Sigmoid colon (tissue), 7 donors: ENCODE measurements at regions of chr11 and their contacts with region 1.

Region 1: GRCh38 chr11:122853971-122854446 is 15.7 kb downstream of the CRTAM start:
- DNase-seq: no peak
- H3K4me3 ChIP-seq: no peak overlapping the region
- H3K27ac ChIP-seq: no peak overlapping the region
- H3K4me1 ChIP-seq: no peaks in the 10 kb centered on the region
- H3K27me3 ChIP-seq: peaks cover 0 to 9% (median 0%) of the 10 kb centered on the region in 3 donors
- CTCF ChIP-seq: peak; percentile 3 to 59 (median 45)
- EP300 ChIP-seq: no peak
- POLR2A ChIP-seq: no peak

Region 2: DNA sequence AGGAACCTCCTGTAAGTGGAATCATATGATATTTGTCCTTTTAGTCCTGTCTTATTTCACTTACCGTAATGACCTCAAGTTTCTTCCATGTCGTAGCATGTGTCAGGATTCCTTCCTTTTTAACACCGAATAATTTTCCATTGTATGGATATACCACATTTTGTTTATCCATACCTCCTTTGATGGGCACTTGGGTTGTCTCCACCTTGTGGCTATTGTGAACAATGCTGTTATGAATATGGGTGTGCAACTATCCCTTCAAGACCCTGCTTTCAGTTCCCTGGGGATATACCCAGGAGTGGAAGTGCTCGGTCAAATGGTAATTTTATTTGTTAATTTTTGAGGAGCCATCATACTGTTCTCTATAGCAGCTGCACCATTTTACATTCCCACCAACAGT is 493.1 kb before region 1 on chr11:
- intact Hi-C with region 1: no loop called
- DNase-seq: no peak
- H3K4me3 ChIP-seq: no peak overlapping the region
- H3K27ac ChIP-seq: no peak overlapping the region
- H3K4me1 ChIP-seq: no peaks in the 10 kb centered on the region
- H3K27me3 ChIP-seq: no peaks in the 10 kb centered on the region
- CTCF ChIP-seq: no peak
- EP300 ChIP-seq: no peak
- POLR2A ChIP-seq: no peak

Region 3: GRCh38 chr11:122584670-122585069 is 269.3 kb before region 1 on chr11:
- intact Hi-C with region 1: loop called (anchors 5 kb)
- DNase-seq: no peak
- H3K4me3 ChIP-seq: no peak overlapping the region
- H3K27ac ChIP-seq: no peak overlapping the region
- H3K4me1 ChIP-seq: peaks cover 0 to 5% (median 2%) of the 10 kb centered on the region in 4 donors
- H3K27me3 ChIP-seq: no peaks in the 10 kb centered on the region
- CTCF ChIP-seq: no peak
- EP300 ChIP-seq: no peak
- POLR2A ChIP-seq: no peak

Region 4: DNA sequence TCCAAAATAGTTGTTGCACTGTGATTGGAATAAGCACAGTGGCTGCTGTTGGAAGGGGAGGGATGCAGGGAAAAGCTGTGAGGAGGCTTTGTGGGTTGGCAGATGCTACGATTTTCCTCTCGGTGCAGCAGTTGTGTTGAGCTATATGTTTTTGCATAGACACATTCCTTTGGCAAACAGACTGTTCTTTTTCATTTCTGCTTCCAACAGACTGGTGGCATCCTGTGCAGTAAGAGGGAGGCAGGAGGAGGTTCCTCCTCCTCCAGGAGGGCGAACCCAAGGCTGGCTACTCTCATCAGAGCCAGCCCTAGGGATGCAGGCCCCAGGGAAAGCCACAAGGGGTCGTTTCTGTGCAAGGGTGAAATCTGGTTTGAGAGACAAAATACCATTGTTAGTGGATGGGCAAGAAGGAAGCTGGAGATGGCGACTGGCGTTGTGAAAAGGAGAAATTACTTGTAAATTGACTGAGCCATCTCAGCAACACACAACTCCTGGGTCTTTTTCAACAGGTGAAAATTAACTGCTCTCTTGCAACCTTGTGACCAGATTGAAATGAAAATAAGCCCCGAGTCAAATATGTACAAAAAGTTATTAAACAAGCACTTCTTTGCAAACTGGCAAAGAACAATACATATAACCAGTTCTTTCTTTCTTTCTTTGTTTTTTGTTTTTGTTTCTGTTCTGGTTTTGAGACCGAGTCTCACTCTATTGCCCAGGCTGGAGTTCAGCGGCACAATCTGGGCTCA is 225.0 kb before region 1 on chr11:
- intact Hi-C with region 1: loop called (anchors 5 kb)
- DNase-seq: peak; percentile 80
- H3K4me3 ChIP-seq: no peak overlapping the region
- H3K27ac ChIP-seq: no peak overlapping the region
- H3K4me1 ChIP-seq: peaks cover 0 to 12% (median 5%) of the 10 kb centered on the region in 4 donors
- H3K27me3 ChIP-seq: no peaks in the 10 kb centered on the region
- CTCF ChIP-seq: peak; percentile 69 to 80 (median 72)
- EP300 ChIP-seq: no peak
- POLR2A ChIP-seq: no peak

Region 5: GRCh38 chr11:122796128-122796717 is 57.8 kb before region 1 on chr11:
- intact Hi-C with region 1: loop called (anchors 5 kb)
- DNase-seq: no peak
- H3K4me3 ChIP-seq: no peak overlapping the region
- H3K27ac ChIP-seq: no peak overlapping the region
- H3K4me1 ChIP-seq: no peaks in the 10 kb centered on the region
- H3K27me3 ChIP-seq: no peaks in the 10 kb centered on the region
- CTCF ChIP-seq: peak in 3 of 4 experiments; percentile 37 to 63 (median 58)
- EP300 ChIP-seq: no peak
- POLR2A ChIP-seq: no peak